Activated naive CD4-positive, alpha-beta T cell treated with anti-CD3 and anti-CD28 coated beads for 36 hours (primary cell): ENCODE measurements at regions of chr3 and their contacts with region 1.

Region 1: GRCh38 chr3:184298759-184299496 is at the start of gene PSMD2:
- DNase-seq: peak; percentile 99
- H3K4me3 Mint-ChIP-seq: peak within 1 kb of the TSS; percentile 98
- H3K27ac Mint-ChIP-seq: peak within 1 kb of the TSS; percentile 87
- H3K4me1 Mint-ChIP-seq: peaks cover 21% of the 10 kb centered on the region
- H3K27me3 Mint-ChIP-seq: no peaks in the 10 kb centered on the region
- total RNA-seq, gene PSMD2: 244 to 257 TPM

Region 2: GRCh38 chr3:184017672-184018423 is 281.1 kb before region 1 on chr3 and contains the start of gene ABCC5:
- CTCF ChIA-PET with region 1: no interaction called
- intact Hi-C with region 1: loop called (anchors 5 kb)
- DNase-seq: peak; percentile 88
- H3K4me3 Mint-ChIP-seq: peak within 1 kb of the TSS; percentile 98
- H3K27ac Mint-ChIP-seq: peak within 1 kb of the TSS; percentile 77
- H3K4me1 Mint-ChIP-seq: peaks cover 16% of the 10 kb centered on the region
- H3K27me3 Mint-ChIP-seq: no peaks in the 10 kb centered on the region
- total RNA-seq, gene ABCC5: 11.2 to 12.0 TPM

Region 3: DNA sequence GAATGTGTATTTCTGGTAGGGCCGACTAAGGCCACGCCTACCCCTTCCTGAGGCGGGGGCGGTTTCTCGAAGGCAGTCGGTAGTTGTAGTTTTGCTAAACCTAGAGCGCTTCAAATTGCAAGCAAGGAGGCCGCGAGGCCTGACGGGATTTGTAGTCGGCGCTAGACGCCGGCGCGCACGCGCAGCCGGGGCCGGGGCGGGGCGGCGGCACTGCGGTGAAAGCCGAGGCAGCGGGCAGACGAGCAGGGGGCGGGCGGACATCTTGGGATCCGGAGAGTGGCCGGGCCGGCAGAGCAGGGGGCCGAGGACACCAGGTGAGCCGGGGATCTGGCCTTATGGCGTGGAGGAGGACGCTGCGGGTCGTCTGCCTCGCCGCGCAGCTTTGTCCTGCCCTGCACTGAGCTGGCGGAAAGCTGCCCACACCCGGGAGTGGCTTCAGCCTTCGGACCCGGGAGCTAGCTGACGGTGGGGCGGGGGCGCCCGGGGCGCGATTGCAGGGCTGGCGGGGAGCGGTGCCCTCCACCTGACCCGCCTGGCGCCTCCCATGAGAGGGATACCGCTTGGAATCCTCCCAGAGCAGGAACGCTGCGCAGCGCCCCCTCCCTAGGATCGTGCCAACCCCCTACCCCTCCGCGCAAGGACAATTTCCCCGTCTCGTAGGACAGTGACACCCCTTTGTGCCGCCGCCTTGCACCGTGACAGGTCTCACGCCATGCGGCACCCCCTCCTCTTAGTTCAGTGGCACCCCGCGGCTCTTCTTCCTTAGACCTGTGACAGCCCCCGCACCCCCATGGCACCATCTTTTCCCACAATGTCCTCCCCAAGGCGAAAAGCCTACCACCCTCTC is 124.1 kb before region 1 on chr3 and contains the start of gene AP2M1:
- CTCF ChIA-PET with region 1: no interaction called
- intact Hi-C with region 1: loop called (anchors 1 kb)
- DNase-seq: peak; percentile 98
- H3K4me3 Mint-ChIP-seq: peak within 1 kb of the TSS; percentile 88
- H3K27ac Mint-ChIP-seq: peak within 1 kb of the TSS; percentile 56
- H3K4me1 Mint-ChIP-seq: peaks cover 29% of the 10 kb centered on the region
- H3K27me3 Mint-ChIP-seq: no peaks in the 10 kb centered on the region
- total RNA-seq, gene AP2M1: 206 to 212 TPM

Region 4: DNA sequence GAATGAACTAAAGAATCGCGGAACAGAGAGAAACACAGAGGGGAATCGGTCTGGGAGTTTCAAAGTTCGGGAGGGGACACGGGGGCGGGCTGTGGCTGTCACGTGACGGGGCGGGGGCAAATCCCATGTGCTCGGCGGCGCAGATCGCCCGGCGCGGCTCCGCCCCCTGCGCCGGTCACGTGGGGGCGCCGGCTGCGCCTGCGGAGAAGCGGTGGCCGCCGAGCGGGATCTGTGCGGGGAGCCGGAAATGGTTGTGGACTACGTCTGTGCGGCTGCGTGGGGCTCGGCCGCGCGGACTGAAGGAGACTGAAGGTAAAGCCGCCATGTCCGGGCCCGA is 15.4 kb after region 1 on chr3 and contains the start of gene EIF4G1:
- CTCF ChIA-PET with region 1: interaction called, 4 read pairs
- intact Hi-C with region 1: loop called (anchors 1 kb)
- DNase-seq: peak; percentile 93
- H3K4me3 Mint-ChIP-seq: peak within 1 kb of the TSS; percentile 86
- H3K27ac Mint-ChIP-seq: peak within 1 kb of the TSS; percentile 90
- H3K4me1 Mint-ChIP-seq: peaks cover 29% of the 10 kb centered on the region
- H3K27me3 Mint-ChIP-seq: no peaks in the 10 kb centered on the region
- total RNA-seq, gene EIF4G1: 345 to 375 TPM

Region 5: GRCh38 chr3:184443380-184443779 is 144.5 kb after region 1 on chr3:
- CTCF ChIA-PET with region 1: no interaction called
- intact Hi-C with region 1: no loop called
- DNase-seq: no peak
- H3K4me3 Mint-ChIP-seq: no peak overlapping the region
- H3K27ac Mint-ChIP-seq: no peak overlapping the region
- H3K4me1 Mint-ChIP-seq: no peaks in the 10 kb centered on the region
- H3K27me3 Mint-ChIP-seq: no peaks in the 10 kb centered on the region

Region 6: GRCh38 chr3:184523825-184524615 is 225.1 kb after region 1 on chr3:
- CTCF ChIA-PET with region 1: no interaction called
- intact Hi-C with region 1: loop called (anchors 1 kb)
- DNase-seq: peak; percentile 45
- H3K4me3 Mint-ChIP-seq: no peak overlapping the region
- H3K27ac Mint-ChIP-seq: peak overlapping the region; percentile 60
- H3K4me1 Mint-ChIP-seq: peaks cover 11% of the 10 kb centered on the region
- H3K27me3 Mint-ChIP-seq: peaks cover 4% of the 10 kb centered on the region

Region 7: DNA sequence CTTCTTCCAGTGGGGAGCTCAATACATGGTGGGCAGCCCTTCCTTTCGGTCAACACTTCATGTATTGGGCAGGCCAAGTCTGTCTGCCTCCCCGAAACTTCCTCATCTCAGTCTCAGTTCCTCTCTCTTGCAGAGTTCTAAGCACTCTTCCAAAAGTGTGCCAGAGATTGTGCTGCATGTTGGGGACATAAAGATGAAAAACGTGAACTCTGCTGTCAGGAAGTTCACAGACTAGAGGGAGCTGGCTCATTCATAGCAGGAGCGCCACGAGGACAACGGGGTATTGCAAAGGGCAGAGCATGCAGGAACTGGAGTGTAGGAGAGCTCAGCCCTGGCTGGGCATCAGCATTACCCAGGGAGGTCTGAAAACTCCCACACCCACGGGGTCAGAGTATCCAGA is 247.3 kb after region 1 on chr3:
- CTCF ChIA-PET with region 1: no interaction called
- intact Hi-C with region 1: no loop called
- DNase-seq: no peak
- H3K4me3 Mint-ChIP-seq: no peak overlapping the region
- H3K27ac Mint-ChIP-seq: no peak overlapping the region
- H3K4me1 Mint-ChIP-seq: peaks cover 7% of the 10 kb centered on the region
- H3K27me3 Mint-ChIP-seq: no peaks in the 10 kb centered on the region

Region 8: DNA sequence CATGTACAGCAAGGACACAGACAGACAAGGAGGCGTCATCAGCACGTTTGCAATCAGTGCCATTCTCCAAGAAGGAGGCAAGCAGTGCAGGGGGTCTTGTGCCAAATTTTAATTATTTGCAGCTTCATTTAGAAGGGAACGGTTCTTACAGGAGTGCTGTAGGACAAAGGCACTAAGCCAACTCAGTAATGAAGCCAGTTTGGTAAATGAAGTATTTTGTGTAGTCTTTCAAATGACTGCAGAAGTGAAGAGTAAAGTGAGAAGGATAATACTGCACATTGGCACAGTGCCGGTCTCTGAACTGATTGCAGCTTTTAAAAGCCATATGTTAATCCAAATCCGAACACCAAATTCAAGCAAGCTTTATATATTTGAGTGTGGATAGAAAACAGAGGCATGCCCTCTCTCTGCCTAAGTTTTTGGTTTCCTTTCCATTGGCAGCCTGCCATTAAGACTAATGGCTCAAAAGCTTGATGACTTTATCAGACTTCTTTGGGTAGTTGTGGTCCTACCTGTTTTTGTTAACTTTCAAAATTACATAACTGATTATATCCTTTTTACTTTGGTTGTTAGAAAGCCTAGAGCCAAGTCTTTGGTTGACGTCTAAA is 1388.4 kb after region 1 on chr3:
- CTCF ChIA-PET with region 1: no interaction called
- intact Hi-C with region 1: no loop called
- DNase-seq: no peak
- H3K4me3 Mint-ChIP-seq: no peak overlapping the region
- H3K27ac Mint-ChIP-seq: no peak overlapping the region
- H3K4me1 Mint-ChIP-seq: no peaks in the 10 kb centered on the region
- H3K27me3 Mint-ChIP-seq: peaks cover 8% of the 10 kb centered on the region